ENCODE measurements at regions of chr17 and their contacts with region 1.

Region 1: DNA sequence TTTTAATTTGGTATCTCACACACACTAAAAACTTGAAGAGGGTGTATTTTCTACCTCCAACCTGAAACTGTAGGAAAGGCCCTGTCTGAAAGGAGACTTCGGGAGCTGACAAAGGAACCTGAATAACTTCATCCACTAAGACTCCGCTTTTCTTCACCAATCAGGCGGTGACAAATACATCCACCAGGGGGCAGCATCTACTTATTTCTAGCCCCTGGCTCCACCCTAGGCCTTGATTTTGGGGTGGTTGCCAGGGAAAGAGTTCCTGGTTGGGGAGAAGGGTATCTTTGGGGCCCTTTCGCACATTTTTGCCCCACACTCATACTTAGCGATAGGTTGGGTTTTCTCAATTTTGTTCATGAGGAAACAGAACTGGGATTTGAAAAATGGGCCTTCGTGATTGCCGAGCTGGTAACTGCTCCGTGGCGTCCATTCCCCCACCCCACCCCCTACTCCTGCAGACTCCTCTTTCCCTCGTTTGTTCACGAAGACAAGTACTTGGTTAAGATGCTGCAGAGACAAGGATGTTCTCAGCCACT is 4.8 kb upstream of the ARL4D start:
- DNase-seq: peak; percentile 93 to 96
- H3K4me3 ChIP-seq: no peak overlapping the region
- H3K27ac ChIP-seq: peak overlapping the region; percentile 65 to 78
- H3K4me1 ChIP-seq: peaks cover 0 to 3% of the 10 kb centered on the region in 2 donors
- H3K27me3 ChIP-seq: no peaks in the 10 kb centered on the region
- CTCF ChIP-seq: peak; percentile 91 to 99 (median 98)
- POLR2A ChIP-seq: peak in 1 of 2 donors; percentile 29

Region 2: GRCh38 chr17:43449470-43450248 is 55.6 kb after region 1 on chr17:
- intact Hi-C with region 1: no loop called
- DNase-seq: no peak
- H3K4me3 ChIP-seq: no peak overlapping the region
- H3K27ac ChIP-seq: peak overlapping the region; percentile 9 to 22
- H3K4me1 ChIP-seq: no peaks in the 10 kb centered on the region
- H3K27me3 ChIP-seq: no peaks in the 10 kb centered on the region
- CTCF ChIP-seq: no peak
- POLR2A ChIP-seq: no peak

Region 3: GRCh38 chr17:43483674-43484372 is 89.8 kb after region 1 on chr17 and contains the start of gene DHX8:
- intact Hi-C with region 1: loop called (anchors 1 kb)
- DNase-seq: peak; percentile 97 to 99
- H3K4me3 ChIP-seq: peak within 1 kb of the TSS; percentile 77 to 82
- H3K27ac ChIP-seq: peak within 1 kb of the TSS; percentile 79 to 86
- H3K4me1 ChIP-seq: peaks cover 0 to 11% of the 10 kb centered on the region in 2 donors
- H3K27me3 ChIP-seq: no peaks in the 10 kb centered on the region
- CTCF ChIP-seq: peak; percentile 100
- POLR2A ChIP-seq: peak; percentile 49 to 70
- total RNA-seq, gene DHX8: 8.5 to 54.6 (median 32.0) TPM

Measured in uterus (tissue), 4 donors.